Endothelial cell of umbilical vein (primary cell): ENCODE measurements at regions of chrX and their contacts with region 1.

Region 1: GRCh38 chrX:12701628-12702027 is 89.6 kb upstream of the PRPS2 start:
- DNase-seq: peak; percentile 46
- H3K4me3 ChIP-seq: no peak overlapping the region
- H3K27ac ChIP-seq: no peak overlapping the region
- H3K4me1 ChIP-seq: no peaks in the 10 kb centered on the region
- H3K27me3 ChIP-seq: no peaks in the 10 kb centered on the region
- CTCF ChIP-seq: peak; percentile 54 to 58
- POLR2A ChIP-seq: no peak

Region 2: DNA sequence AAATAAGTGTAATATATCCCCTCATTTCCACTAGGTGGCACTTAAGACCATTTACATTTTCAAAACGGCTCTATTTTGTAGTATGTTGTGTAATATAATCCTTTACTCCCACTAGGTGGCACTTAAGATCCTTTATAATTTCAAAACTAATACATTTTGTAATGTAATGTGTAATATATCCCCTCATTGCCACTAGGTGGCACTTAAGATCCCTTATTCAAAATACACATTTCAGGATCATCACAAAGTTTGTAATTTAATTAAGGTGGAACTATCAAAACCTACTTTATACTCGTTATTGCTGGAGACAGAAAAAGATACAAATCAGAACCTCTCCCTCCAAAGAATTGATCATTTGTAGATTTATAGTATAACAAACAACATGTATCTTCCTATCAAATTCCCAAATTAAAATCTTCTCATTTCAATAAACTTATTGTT is 1168.4 kb before region 1 on chrX:
- CTCF ChIA-PET with region 1: interaction called, 3 read pairs
- POLR2A ChIA-PET with region 1: no interaction called
- dilution Hi-C with region 1: no loop called
- intact Hi-C with region 1: loop called (anchors 10 kb)
- DNase-seq: peak; percentile 67
- H3K4me3 ChIP-seq: no peak overlapping the region
- H3K27ac ChIP-seq: no peak overlapping the region
- H3K4me1 ChIP-seq: no peaks in the 10 kb centered on the region
- H3K27me3 ChIP-seq: peaks cover 0 to 3% of the 10 kb centered on the region in 2 experiments
- CTCF ChIP-seq: peak; percentile 30 to 43
- POLR2A ChIP-seq: no peak

Region 3: GRCh38 chrX:12080265-12080664 is 621.4 kb before region 1 on chrX:
- CTCF ChIA-PET with region 1: interaction called, 49 read pairs
- POLR2A ChIA-PET with region 1: no interaction called
- dilution Hi-C with region 1: no loop called
- intact Hi-C with region 1: loop called (anchors 1 kb)
- DNase-seq: peak; percentile 42
- H3K4me3 ChIP-seq: no peak overlapping the region
- H3K27ac ChIP-seq: no peak overlapping the region
- H3K4me1 ChIP-seq: no peaks in the 10 kb centered on the region
- H3K27me3 ChIP-seq: no peaks in the 10 kb centered on the region
- CTCF ChIP-seq: peak; percentile 31 to 45
- POLR2A ChIP-seq: no peak

Region 4: DNA sequence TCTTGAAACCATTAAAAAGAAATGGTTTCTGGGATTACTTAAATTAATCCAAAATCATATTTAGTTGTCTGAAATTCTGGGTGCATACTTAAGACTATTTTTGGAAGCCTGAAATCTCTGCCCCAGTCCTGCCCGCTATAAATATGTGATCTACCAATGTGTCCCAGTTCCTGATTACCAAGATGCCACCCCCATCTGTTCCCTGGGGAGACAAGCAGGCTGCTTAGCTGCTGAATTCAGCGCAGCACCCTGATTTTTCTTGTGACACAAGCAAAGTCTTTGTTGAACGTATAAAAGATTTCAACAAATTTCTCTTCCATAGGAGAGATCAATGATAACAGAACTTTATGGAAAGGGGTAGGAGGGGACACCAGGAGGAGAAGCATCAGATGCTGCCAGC is 11.0 kb before region 1 on chrX:
- CTCF ChIA-PET with region 1: interaction called, 26 read pairs
- POLR2A ChIA-PET with region 1: no interaction called
- dilution Hi-C with region 1: no loop called
- intact Hi-C with region 1: no loop called
- DNase-seq: no peak
- H3K4me3 ChIP-seq: no peak overlapping the region
- H3K27ac ChIP-seq: no peak overlapping the region
- H3K4me1 ChIP-seq: no peaks in the 10 kb centered on the region
- H3K27me3 ChIP-seq: no peaks in the 10 kb centered on the region
- CTCF ChIP-seq: no peak
- POLR2A ChIP-seq: no peak

Region 5: DNA sequence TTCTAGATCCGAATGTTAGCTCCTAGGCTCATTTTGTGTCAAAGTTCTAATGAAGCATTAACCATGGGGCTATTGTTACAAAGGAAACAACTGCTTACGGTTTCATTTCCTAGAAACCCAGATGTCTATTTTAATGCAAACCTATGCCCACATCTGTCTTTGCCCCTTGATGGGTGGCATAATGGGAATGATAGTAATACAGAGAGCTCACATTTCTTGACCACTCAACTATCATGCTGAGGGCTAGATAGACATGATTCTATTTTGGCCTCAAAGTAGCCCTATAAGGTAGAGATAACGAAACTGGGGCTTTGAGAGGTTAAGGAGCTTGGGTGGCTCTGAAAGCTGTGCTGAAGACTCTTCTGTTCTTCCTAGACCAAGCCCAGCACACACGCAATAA is 167.1 kb after region 1 on chrX:
- CTCF ChIA-PET with region 1: no interaction called
- POLR2A ChIA-PET with region 1: no interaction called
- dilution Hi-C with region 1: no loop called
- intact Hi-C with region 1: no loop called
- DNase-seq: no peak
- H3K4me3 ChIP-seq: no peak overlapping the region
- H3K27ac ChIP-seq: no peak overlapping the region
- H3K4me1 ChIP-seq: no peaks in the 10 kb centered on the region
- H3K27me3 ChIP-seq: peaks cover 0 to 6% of the 10 kb centered on the region in 2 experiments
- CTCF ChIP-seq: no peak
- POLR2A ChIP-seq: no peak

Region 6: GRCh38 chrX:12894074-12895030 is 192.7 kb after region 1 on chrX:
- CTCF ChIA-PET with region 1: no interaction called
- POLR2A ChIA-PET with region 1: no interaction called
- dilution Hi-C with region 1: no loop called
- intact Hi-C with region 1: loop called (anchors 1 kb)
- DNase-seq: peak; percentile 38
- H3K4me3 ChIP-seq: no peak overlapping the region
- H3K27ac ChIP-seq: no peak overlapping the region
- H3K4me1 ChIP-seq: peaks cover 2% of the 10 kb centered on the region
- H3K27me3 ChIP-seq: peaks cover 0 to 2% of the 10 kb centered on the region in 2 experiments
- CTCF ChIP-seq: peak; percentile 52 to 65
- POLR2A ChIP-seq: no peak